ENCODE measurements at regions of chr1 and their contacts with region 1.

Region 1: GRCh38 chr1:26999440-26999987 is 6.0 kb downstream of the TRNP1 start:
- DNase-seq: peak; percentile 80 to 83
- H3K4me3 ChIP-seq: no peak overlapping the region
- H3K27ac ChIP-seq: peak overlapping the region; percentile 33 to 75 (median 68)
- H3K4me1 ChIP-seq: peaks cover 31 to 49% of the 10 kb centered on the region in 2 donors
- H3K27me3 ChIP-seq: no peaks in the 10 kb centered on the region
- CTCF ChIP-seq: no peak
- POLR2A ChIP-seq: peak in 1 of 2 donors; percentile 26

Region 2: GRCh38 chr1:27097484-27097917 is 98.0 kb after region 1 on chr1:
- intact Hi-C with region 1: loop called (anchors 5 kb)
- DNase-seq: peak; percentile 73 to 77
- H3K4me3 ChIP-seq: no peak overlapping the region
- H3K27ac ChIP-seq: no peak overlapping the region
- H3K4me1 ChIP-seq: peaks cover 5 to 21% of the 10 kb centered on the region in 2 donors
- H3K27me3 ChIP-seq: no peaks in the 10 kb centered on the region
- CTCF ChIP-seq: peak; percentile 86 to 98 (median 94)
- POLR2A ChIP-seq: no peak

Measured in thyroid gland (tissue), 4 donors.